GM13977 (cell line): ENCODE measurements at regions of chrX and their contacts with region 1.

Region 1: DNA sequence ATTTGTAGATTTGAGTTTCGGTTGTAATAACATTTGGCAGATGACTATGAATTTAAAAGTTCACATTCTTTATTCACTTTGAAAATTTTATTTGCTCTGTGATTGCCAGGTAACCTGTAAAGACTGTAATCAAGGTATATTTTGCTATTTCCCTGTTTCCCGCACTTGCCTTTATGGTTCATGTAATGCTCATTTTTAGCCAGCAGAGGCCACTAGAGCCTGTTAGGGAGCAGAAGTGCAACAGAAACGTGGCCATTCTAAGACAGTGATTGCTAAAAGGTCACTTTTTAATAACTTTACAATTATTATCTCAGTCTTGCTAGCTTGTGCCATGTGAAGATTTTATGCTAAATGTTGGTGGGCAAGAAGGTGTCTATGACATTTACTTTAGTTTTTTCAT is 12.4 kb downstream of the YIPF6 start:
- DNase-seq: peak; percentile 63
- CTCF ChIP-seq: peak; percentile 82

Region 2: GRCh38 chrX:68710870-68711576 is 199.8 kb after region 1 on chrX:
- in situ Hi-C with region 1: loop called (anchors 25 kb)
- DNase-seq: peak; percentile 68
- CTCF ChIP-seq: peak; percentile 66